BJ (cell line): ENCODE measurements at regions of chr13 and their contacts with region 1.

Region 1: GRCh38 chr13:46648166-46648635 is 95.2 kb downstream of the LRCH1 start:
- DNase-seq: no peak
- H3K4me3 ChIP-seq: no peak overlapping the region
- H3K27me3 ChIP-seq: no peaks in the 10 kb centered on the region
- CTCF ChIP-seq: no peak

Region 2: DNA sequence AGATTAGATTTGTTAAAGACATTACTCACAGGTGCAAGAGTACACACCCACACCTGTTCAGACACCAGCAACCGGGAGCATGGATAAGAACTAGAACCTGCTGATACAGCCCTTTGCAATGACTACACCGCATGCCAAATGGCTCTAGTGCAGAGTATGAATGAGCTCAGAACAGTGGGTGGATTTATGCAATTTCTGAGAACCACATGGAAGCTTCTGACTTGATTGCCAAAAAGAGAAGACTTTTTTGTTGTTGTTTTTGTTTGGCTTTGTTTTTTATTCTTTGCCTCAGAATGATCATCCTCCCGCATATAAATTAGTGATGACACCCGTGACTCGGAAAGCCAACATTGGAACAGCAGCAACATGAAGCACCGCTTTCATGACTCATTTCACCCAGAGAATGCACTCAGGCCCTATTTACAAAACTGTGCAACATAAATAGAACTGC is 172.6 kb before region 1 on chr13:
- CTCF ChIA-PET with region 1: no interaction called
- POLR2A ChIA-PET with region 1: no interaction called
- DNase-seq: no peak
- H3K4me3 ChIP-seq: no peak overlapping the region
- H3K27me3 ChIP-seq: no peaks in the 10 kb centered on the region
- CTCF ChIP-seq: no peak

Region 3: GRCh38 chr13:46571189-46571908 is 76.9 kb before region 1 on chr13:
- CTCF ChIA-PET with region 1: no interaction called
- POLR2A ChIA-PET with region 1: interaction called, 13 read pairs
- DNase-seq: no peak
- H3K4me3 ChIP-seq: no peak overlapping the region
- H3K27me3 ChIP-seq: no peaks in the 10 kb centered on the region
- CTCF ChIP-seq: no peak

Region 4: GRCh38 chr13:46834657-46835056 is 186.5 kb after region 1 on chr13:
- CTCF ChIA-PET with region 1: no interaction called
- POLR2A ChIA-PET with region 1: no interaction called
- DNase-seq: no peak
- H3K4me3 ChIP-seq: no peak overlapping the region
- H3K27me3 ChIP-seq: no peaks in the 10 kb centered on the region; the same call in 1 of the 2 replicates
- CTCF ChIP-seq: no peak